Right lobe of liver (tissue), 6 donors: ENCODE measurements at regions of chr22 and their contacts with region 1.

Region 1: GRCh38 chr22:32991353-32992121 is 66.6 kb downstream of the SYN3 start:
- DNase-seq: no peak
- ATAC-seq: no peak
- H3K4me3 ChIP-seq: no peak overlapping the region
- H3K27ac ChIP-seq: no peak overlapping the region
- H3K4me1 ChIP-seq: no peaks in the 10 kb centered on the region
- H3K27me3 ChIP-seq: no peaks in the 10 kb centered on the region
- CTCF ChIP-seq: no peak
- POLR2A ChIP-seq: no peak

Region 2: GRCh38 chr22:32528984-32529982 is 462.3 kb before region 1 on chr22:
- intact Hi-C with region 1: loop called (anchors 10 kb)
- DNase-seq: peak; percentile 87 to 88 (median 88)
- ATAC-seq: peak; percentile 91 to 93 (median 92)
- H3K4me3 ChIP-seq: peak overlapping the region in 1 of 3 donors; percentile 32
- H3K27ac ChIP-seq: peak overlapping the region in 2 of 3 donors; percentile 50 to 51
- H3K4me1 ChIP-seq: peaks cover 0 to 24% (median 4%) of the 10 kb centered on the region in 4 donors
- H3K27me3 ChIP-seq: no peaks in the 10 kb centered on the region
- CTCF ChIP-seq: peak; percentile 85 to 94 (median 87)
- POLR2A ChIP-seq: no peak

Region 3: GRCh38 chr22:32649515-32650200 is 341.9 kb before region 1 on chr22:
- intact Hi-C with region 1: loop called in 1 of 2 experiments (anchors 10 kb)
- DNase-seq: no peak
- ATAC-seq: no peak
- H3K4me3 ChIP-seq: no peak overlapping the region
- H3K27ac ChIP-seq: no peak overlapping the region
- H3K4me1 ChIP-seq: peaks cover 0 to 4% (median under 1%) of the 10 kb centered on the region in 4 donors
- H3K27me3 ChIP-seq: no peaks in the 10 kb centered on the region
- CTCF ChIP-seq: no peak
- POLR2A ChIP-seq: no peak

Region 4: GRCh38 chr22:32796865-32797573 is 194.5 kb before region 1 on chr22:
- intact Hi-C with region 1: no loop called
- DNase-seq: peak; percentile 67 to 82 (median 76)
- ATAC-seq: peak; percentile 65 to 75 (median 72)
- H3K4me3 ChIP-seq: no peak overlapping the region
- H3K27ac ChIP-seq: no peak overlapping the region
- H3K4me1 ChIP-seq: peaks cover 0 to 4% (median 0%) of the 10 kb centered on the region in 4 donors
- H3K27me3 ChIP-seq: no peaks in the 10 kb centered on the region
- CTCF ChIP-seq: peak; percentile 81 to 94 (median 90)
- POLR2A ChIP-seq: no peak

Region 5: DNA sequence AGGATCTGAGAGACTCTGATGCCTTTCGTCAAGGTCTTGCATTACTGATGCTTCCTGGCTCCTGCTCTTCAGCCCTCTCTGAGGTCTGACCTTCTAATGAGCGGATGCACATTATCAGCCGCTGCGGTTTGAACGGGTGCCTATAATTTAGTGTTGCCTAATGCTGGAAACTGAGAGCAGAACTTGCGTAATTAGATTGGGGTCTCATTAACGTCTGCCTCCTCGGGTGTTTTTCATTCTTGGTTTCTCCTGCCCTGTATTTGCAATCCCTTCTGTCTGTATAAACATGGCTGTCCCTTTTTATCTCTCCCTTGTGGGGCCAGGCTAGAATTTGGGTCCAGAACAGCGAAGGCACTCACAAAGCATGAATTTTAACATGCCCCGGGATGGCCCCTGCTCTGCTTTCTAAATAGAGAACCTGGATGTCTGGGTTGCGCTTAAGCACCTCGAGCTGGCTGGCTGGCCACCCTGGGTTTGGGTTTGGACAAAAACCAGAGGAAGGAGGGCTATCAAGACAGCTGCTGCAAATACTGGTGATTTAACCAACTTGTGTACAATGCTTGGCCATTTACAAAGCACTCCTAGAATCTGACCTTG is 71.4 kb before region 1 on chr22:
- intact Hi-C with region 1: loop called (anchors 5 kb)
- DNase-seq: peak in 1 of 3 donors; percentile 48
- ATAC-seq: peak; percentile 51 to 87 (median 63)
- H3K4me3 ChIP-seq: no peak overlapping the region
- H3K27ac ChIP-seq: no peak overlapping the region
- H3K4me1 ChIP-seq: no peaks in the 10 kb centered on the region
- H3K27me3 ChIP-seq: no peaks in the 10 kb centered on the region
- CTCF ChIP-seq: no peak
- POLR2A ChIP-seq: no peak

Region 6: GRCh38 chr22:33209930-33210784 is 218.6 kb after region 1 on chr22:
- intact Hi-C with region 1: no loop called
- DNase-seq: peak in 2 of 3 donors; percentile 18 to 46
- ATAC-seq: peak; percentile 86 to 88 (median 86)
- H3K4me3 ChIP-seq: no peak overlapping the region
- H3K27ac ChIP-seq: no peak overlapping the region
- H3K4me1 ChIP-seq: no peaks in the 10 kb centered on the region
- H3K27me3 ChIP-seq: no peaks in the 10 kb centered on the region
- CTCF ChIP-seq: peak; percentile 42 to 70 (median 70)
- POLR2A ChIP-seq: no peak

Region 7: DNA sequence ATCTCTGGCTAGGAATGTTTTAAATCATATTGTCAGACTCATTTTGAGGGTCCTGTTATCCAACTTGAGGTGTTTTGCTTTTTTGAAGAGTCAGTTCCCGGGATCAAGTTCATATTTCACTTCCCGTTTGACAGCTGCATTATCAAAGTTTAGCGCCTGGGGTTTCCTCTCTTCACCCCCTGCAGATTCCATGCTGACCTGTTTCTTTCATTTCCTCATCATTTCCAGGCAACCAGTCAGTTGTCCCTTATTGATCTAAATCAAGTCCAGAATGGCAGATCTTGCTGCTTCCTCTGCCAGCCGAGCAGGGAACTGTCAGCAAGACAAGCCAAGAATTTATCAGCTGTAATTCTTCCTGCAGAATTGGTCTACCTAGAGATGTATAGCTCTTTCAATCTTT is 264.3 kb after region 1 on chr22:
- intact Hi-C with region 1: no loop called
- DNase-seq: peak in 1 of 3 donors; percentile 38
- ATAC-seq: peak; percentile 43 to 88 (median 70)
- H3K4me3 ChIP-seq: no peak overlapping the region
- H3K27ac ChIP-seq: no peak overlapping the region
- H3K4me1 ChIP-seq: no peaks in the 10 kb centered on the region
- H3K27me3 ChIP-seq: no peaks in the 10 kb centered on the region
- CTCF ChIP-seq: no peak
- POLR2A ChIP-seq: no peak